ENCODE measurements at regions of chr17 and their contacts with region 1.

Region 1: GRCh38 chr17:56478836-56479447 is 114.6 kb upstream of the NOG start:
- DNase-seq: no peak
- ATAC-seq: peak; percentile 73
- H3K4me3 ChIP-seq: no peak overlapping the region
- H3K27ac ChIP-seq: no peak overlapping the region
- H3K4me1 ChIP-seq: no peaks in the 10 kb centered on the region
- H3K27me3 ChIP-seq: no peaks in the 10 kb centered on the region; a peak in 1 of 4 replicates
- CTCF ChIP-seq: peak; percentile 45 to 53 (median 53); a peak in 5 of 6 replicates
- EP300 ChIP-seq: no peak
- POLR2A ChIP-seq: no peak
- RAD21 ChIP-seq: peak; percentile 50; the same call in 1 of the 2 replicates

Region 2: DNA sequence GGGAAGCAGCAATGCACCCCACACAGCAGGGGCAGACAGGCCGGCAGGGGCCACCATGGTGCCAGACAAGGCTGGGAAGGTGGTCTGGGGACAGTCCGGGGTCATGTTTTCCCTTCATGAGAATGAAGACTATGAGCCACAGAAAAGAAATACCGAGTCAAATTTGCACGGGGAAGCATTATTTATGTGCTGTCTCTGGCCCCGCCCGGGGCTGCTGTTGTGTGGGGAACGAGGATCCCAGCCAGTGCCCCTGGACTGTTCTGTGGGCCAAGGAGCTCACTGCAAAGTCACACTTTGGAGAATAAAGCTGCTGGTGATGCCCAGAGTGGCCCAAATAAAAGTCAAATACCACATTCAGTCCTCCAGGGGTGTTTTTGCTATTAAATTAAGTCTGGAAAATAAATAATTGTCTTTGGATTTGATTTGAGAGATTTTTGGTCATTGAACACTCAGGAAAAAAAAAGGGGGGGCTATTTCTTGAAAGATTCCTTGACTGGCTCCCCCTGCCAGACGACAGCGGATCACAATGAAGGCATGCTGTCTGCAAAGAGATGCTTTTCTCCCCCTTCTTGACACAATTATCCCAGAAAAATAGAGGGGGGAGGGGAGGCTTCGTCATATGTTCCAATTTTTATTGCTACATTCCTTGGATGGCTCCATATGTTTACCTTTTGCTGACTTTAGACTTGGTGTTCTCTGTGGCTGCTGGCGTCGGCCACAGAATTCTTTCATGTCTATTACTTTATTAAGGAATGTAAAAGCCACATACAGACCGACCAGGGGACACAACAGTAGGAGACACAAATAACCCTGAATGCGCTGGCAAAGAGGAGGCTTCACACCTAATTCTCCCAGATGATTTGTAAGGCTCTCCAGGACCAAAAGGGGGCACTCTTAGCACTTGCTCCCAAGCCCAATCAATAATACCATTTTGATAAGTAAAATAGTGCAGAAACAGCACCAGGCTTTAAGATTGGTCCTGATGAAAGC is 352.8 kb before region 1 on chr17:
- CTCF ChIA-PET with region 1: interaction called, 5 read pairs
- POLR2A ChIA-PET with region 1: no interaction called
- RAD21 ChIA-PET with region 1: no interaction called
- SMC1A ChIA-PET with region 1: no interaction called
- in situ Hi-C with region 1: no loop called
- intact Hi-C with region 1: loop called (anchors 5 kb)
- DNase-seq: no peak
- ATAC-seq: no peak
- H3K4me3 ChIP-seq: no peak overlapping the region
- H3K27ac ChIP-seq: no peak overlapping the region
- H3K4me1 ChIP-seq: no peaks in the 10 kb centered on the region
- H3K27me3 ChIP-seq: no peaks in the 10 kb centered on the region
- CTCF ChIP-seq: peak; percentile 17 to 25 (median 21); a peak in 2 of 6 replicates
- EP300 ChIP-seq: no peak
- POLR2A ChIP-seq: no peak
- RAD21 ChIP-seq: peak; percentile 55

Region 3: GRCh38 chr17:56465886-56466285 is 13.1 kb before region 1 on chr17:
- CTCF ChIA-PET with region 1: no interaction called
- POLR2A ChIA-PET with region 1: no interaction called
- RAD21 ChIA-PET with region 1: no interaction called
- SMC1A ChIA-PET with region 1: interaction called, 10 read pairs
- in situ Hi-C with region 1: no loop called
- intact Hi-C with region 1: no loop called
- DNase-seq: no peak
- ATAC-seq: no peak
- H3K4me3 ChIP-seq: no peak overlapping the region
- H3K27ac ChIP-seq: no peak overlapping the region
- H3K4me1 ChIP-seq: no peaks in the 10 kb centered on the region
- H3K27me3 ChIP-seq: no peaks in the 10 kb centered on the region; a peak in 1 of 4 replicates
- CTCF ChIP-seq: no peak
- EP300 ChIP-seq: no peak
- POLR2A ChIP-seq: no peak
- RAD21 ChIP-seq: no peak

Region 4: GRCh38 chr17:56499799-56500388 is 21.0 kb after region 1 on chr17:
- CTCF ChIA-PET with region 1: interaction called, 10 read pairs
- POLR2A ChIA-PET with region 1: interaction called, 4 read pairs
- RAD21 ChIA-PET with region 1: no interaction called
- SMC1A ChIA-PET with region 1: no interaction called
- in situ Hi-C with region 1: no loop called
- intact Hi-C with region 1: no loop called
- DNase-seq: no peak
- ATAC-seq: no peak
- H3K4me3 ChIP-seq: no peak overlapping the region
- H3K27ac ChIP-seq: no peak overlapping the region
- H3K4me1 ChIP-seq: no peaks in the 10 kb centered on the region
- H3K27me3 ChIP-seq: 0 out of 4 replicates have a peak, but pooled peaks cover 0 to 4% of the 10 kb centered on the region in 2 experiments
- CTCF ChIP-seq: peak in 1 of 3 experiments; percentile 26; a peak in 1 of 6 replicates
- EP300 ChIP-seq: no peak
- POLR2A ChIP-seq: no peak
- RAD21 ChIP-seq: peak; percentile 42; the same call in 1 of the 2 replicates

Measured in GM12878 (cell line).